ENCODE measurements at regions of chr19 and their contacts with region 1.

Region 1: DNA sequence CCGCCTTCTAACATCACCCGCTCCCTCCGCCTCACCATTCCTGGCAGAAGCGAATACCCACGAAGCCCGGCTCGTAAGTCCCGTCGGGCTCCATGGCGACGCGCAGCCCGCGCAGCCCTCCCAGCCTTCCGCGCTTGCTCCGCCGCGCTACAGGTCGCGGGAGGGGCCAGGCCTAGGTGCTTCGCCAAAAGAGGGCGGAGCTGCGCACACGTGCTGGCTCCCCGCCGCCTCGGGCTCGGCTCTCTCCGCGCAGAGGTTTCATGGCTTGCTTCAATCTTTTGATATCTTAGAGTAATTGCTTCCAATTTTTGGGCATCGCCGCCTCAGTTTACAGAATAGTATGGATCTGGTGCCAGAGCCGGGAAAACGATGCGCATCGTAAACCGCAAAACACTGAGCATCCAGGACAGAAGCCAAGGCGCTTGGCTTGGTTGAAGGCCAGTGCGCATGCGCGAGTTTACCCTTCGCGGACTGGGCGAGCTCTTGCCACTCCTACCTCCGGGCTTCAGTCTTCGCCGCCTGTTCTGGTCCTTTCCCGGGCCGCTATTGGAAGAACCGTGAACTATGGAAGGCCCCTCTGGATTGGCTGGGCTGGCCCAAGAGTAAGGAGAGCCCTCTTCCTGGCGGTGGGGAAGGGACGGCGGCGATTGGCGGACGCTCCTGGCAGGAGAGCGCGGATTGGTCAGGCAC is at the start of gene POLR2I:
- DNase-seq: peak; percentile 98 to 99 (median 98)
- ATAC-seq: peak; percentile 96
- H3K4me3 ChIP-seq: peak within 1 kb of the TSS; percentile 62
- H3K27ac ChIP-seq: peak within 1 kb of the TSS; percentile 74
- H3K4me1 ChIP-seq: peaks cover 5 to 38% of the 10 kb centered on the region in 2 experiments; a peak in 3 of 5 replicates
- H3K27me3 ChIP-seq: no peaks in the 10 kb centered on the region
- CTCF ChIP-seq: 0 out of 6 replicates have a peak, but pooled peaks of 1 of the 3 experiments have one; percentile 5
- EP300 ChIP-seq: no peak
- POLR2A ChIP-seq: peak; percentile 69
- RAD21 ChIP-seq: 0 out of 4 replicates have a peak, but pooled peaks of 1 of the 2 experiments have one; percentile 12
- polyA plus RNA-seq, gene POLR2I: 197 to 235 TPM

Region 2: DNA sequence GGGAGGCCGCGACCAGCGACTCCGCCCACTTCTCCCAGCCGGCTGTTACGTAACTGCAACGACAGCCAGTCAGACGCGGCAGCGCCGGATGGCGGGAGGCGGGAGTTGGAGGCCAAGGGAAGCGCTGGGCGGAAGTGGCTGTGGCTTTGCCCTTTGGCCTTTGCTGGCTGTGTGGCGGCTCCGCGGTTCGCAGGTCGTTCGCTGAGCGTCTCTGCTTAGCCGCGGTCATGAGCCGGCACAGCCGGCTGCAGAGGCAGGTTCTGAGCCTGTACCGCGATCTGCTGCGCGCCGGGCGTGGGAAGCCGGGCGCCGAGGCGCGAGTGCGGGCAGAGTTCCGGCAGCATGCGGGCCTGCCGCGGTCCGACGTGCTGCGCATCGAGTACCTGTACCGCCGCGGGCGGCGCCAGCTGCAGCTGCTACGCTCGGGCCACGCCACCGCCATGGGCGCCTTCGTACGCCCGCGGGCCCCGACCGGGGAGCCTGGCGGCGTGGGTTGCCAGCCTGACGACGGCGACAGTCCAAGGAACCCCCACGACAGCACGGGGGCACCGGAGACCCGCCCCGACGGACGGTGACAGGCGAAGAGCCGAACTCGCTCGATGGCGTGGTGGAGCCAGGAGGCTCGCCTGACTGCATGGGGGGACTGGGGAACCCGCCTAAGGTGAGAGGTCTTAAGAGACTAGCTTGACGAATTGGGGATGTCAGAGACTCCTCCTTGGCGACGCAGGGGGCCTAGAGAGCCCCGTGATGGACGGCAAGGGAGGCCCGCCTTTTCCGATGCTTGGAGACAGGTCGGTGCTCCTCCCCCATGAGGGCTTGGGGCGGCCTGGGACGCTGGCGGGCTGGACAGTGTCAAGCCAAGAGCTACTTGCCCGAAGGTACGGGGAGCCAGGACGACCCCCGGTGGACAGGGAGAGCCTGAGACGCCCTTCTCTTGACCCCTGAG is 119.6 kb before region 1 on chr19 and contains the start of gene SDHAF1:
- CTCF ChIA-PET with region 1: no interaction called
- POLR2A ChIA-PET with region 1: no interaction called
- in situ Hi-C with region 1: no loop called
- intact Hi-C with region 1: loop called (anchors 10 kb)
- DNase-seq: peak; percentile 95 to 98 (median 96)
- ATAC-seq: peak; percentile 93
- H3K4me3 ChIP-seq: peak within 1 kb of the TSS; percentile 59
- H3K27ac ChIP-seq: peak within 1 kb of the TSS; percentile 73
- H3K4me1 ChIP-seq: peaks cover 9 to 29% of the 10 kb centered on the region in 2 experiments; a peak in 4 of 5 replicates
- H3K27me3 ChIP-seq: no peaks in the 10 kb centered on the region
- CTCF ChIP-seq: peak in 2 of 3 experiments; percentile 3 to 14; a peak in 1 of 6 replicates
- EP300 ChIP-seq: no peak
- POLR2A ChIP-seq: peak; percentile 88
- RAD21 ChIP-seq: no peak
- polyA plus RNA-seq, gene SDHAF1: 0.42 to 1.1 TPM

Region 3: GRCh38 chr19:36060430-36060829 is 54.5 kb before region 1 on chr19:
- CTCF ChIA-PET with region 1: interaction called, 3 read pairs
- POLR2A ChIA-PET with region 1: no interaction called
- in situ Hi-C with region 1: no loop called
- intact Hi-C with region 1: loop called (anchors 5 kb)
- DNase-seq: peak; percentile 42 to 68 (median 47)
- ATAC-seq: peak; percentile 84
- H3K4me3 ChIP-seq: no peak overlapping the region
- H3K27ac ChIP-seq: no peak overlapping the region
- H3K4me1 ChIP-seq: peaks cover 5% of the 10 kb centered on the region in 2 experiments; a peak in 3 of 5 replicates
- H3K27me3 ChIP-seq: no peaks in the 10 kb centered on the region
- CTCF ChIP-seq: peak; percentile 55 to 72 (median 72)
- EP300 ChIP-seq: no peak
- POLR2A ChIP-seq: no peak
- RAD21 ChIP-seq: peak; percentile 50 to 59

Region 4: GRCh38 chr19:36089847-36090246 is 25.1 kb before region 1 on chr19:
- CTCF ChIA-PET with region 1: no interaction called
- POLR2A ChIA-PET with region 1: no interaction called
- in situ Hi-C with region 1: no loop called
- intact Hi-C with region 1: no loop called
- DNase-seq: no peak
- ATAC-seq: no peak
- H3K4me3 ChIP-seq: no peak overlapping the region
- H3K27ac ChIP-seq: no peak overlapping the region
- H3K4me1 ChIP-seq: no peaks in the 10 kb centered on the region
- H3K27me3 ChIP-seq: no peaks in the 10 kb centered on the region
- CTCF ChIP-seq: no peak
- EP300 ChIP-seq: no peak
- POLR2A ChIP-seq: no peak
- RAD21 ChIP-seq: no peak

Region 5: DNA sequence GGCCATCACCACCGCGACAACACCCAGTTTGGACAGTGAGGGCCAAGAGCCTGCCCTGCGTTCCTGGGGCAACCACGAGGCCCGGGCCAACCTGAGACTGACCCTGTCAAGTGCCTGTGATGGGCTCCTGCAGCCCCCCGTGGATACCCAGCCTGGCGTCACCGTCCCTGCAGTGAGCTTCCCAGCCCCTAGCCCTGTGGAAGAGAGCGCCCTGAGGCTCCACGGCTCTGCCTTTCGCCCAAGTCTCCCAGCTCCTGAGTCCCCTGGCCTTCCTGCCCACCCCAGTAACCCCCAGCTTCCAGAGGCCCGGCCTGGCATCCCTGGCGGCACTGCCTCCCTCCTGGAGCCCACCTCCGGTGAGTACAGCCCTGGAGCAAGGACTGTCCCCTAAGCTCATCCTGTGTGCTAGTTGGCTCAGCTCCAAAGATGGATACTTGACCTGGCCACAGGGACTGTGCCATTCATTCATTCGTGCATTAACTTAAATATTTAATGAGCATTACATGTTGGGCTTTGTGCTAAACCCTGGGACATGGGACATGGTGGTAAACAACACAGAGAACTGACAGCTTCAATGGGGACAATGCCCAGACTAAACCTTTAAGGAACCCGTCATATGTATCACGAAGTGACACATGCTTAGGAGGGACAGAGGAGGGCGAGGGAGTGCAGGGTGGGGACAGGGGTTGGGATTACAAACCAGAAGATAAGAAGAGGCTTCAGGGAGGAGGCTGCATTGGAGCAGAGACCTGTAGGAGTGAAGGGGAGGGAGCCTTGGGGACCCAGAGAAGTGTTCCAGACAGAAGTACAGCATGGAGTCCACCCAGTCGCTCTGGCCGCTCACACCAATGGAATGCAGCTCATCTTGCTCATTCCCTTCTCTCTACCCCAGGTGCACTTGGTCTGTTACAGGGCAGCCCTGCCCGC is 11.0 kb before region 1 on chr19:
- CTCF ChIA-PET with region 1: no interaction called
- POLR2A ChIA-PET with region 1: interaction called, 10 read pairs
- in situ Hi-C with region 1: no loop called
- intact Hi-C with region 1: no loop called
- DNase-seq: peak; percentile 69 to 90 (median 82)
- ATAC-seq: peak; percentile 93
- H3K4me3 ChIP-seq: no peak overlapping the region
- H3K27ac ChIP-seq: peak overlapping the region; percentile 31; the same call in 1 of the 3 replicates
- H3K4me1 ChIP-seq: peaks cover 15 to 54% of the 10 kb centered on the region in 2 experiments; a peak in 4 of 5 replicates
- H3K27me3 ChIP-seq: no peaks in the 10 kb centered on the region
- CTCF ChIP-seq: peak in 2 of 3 experiments; percentile 9 to 14; a peak in 1 of 6 replicates
- EP300 ChIP-seq: no peak; the same call in 1 of the 2 replicates
- POLR2A ChIP-seq: no peak
- RAD21 ChIP-seq: no peak

Region 6: GRCh38 chr19:36139473-36140303 is 24.8 kb after region 1 on chr19 and contains the start of gene CAPNS1:
- CTCF ChIA-PET with region 1: no interaction called
- POLR2A ChIA-PET with region 1: interaction called, 4 read pairs
- in situ Hi-C with region 1: no loop called
- intact Hi-C with region 1: loop called (anchors 2 kb)
- DNase-seq: peak; percentile 95 to 98 (median 96)
- ATAC-seq: peak; percentile 87
- H3K4me3 ChIP-seq: peak within 1 kb of the TSS; percentile 95
- H3K27ac ChIP-seq: peak within 1 kb of the TSS; percentile 99
- H3K4me1 ChIP-seq: peaks cover 13 to 37% of the 10 kb centered on the region in 2 experiments
- H3K27me3 ChIP-seq: no peaks in the 10 kb centered on the region
- CTCF ChIP-seq: peak in 2 of 3 experiments; percentile 17 to 35; a peak in 3 of 6 replicates
- EP300 ChIP-seq: no peak; the same call in 1 of the 2 replicates
- POLR2A ChIP-seq: peak; percentile 92
- RAD21 ChIP-seq: no peak
- polyA plus RNA-seq, gene CAPNS1: 77.9 to 115 TPM

Region 7: GRCh38 chr19:36169084-36169760 is 54.3 kb after region 1 on chr19:
- CTCF ChIA-PET with region 1: no interaction called
- POLR2A ChIA-PET with region 1: no interaction called
- in situ Hi-C with region 1: no loop called
- intact Hi-C with region 1: loop called (anchors 1 kb)
- DNase-seq: no peak
- ATAC-seq: no peak
- H3K4me3 ChIP-seq: no peak overlapping the region
- H3K27ac ChIP-seq: no peak overlapping the region
- H3K4me1 ChIP-seq: no peaks in the 10 kb centered on the region; a peak in 2 of 5 replicates
- H3K27me3 ChIP-seq: no peaks in the 10 kb centered on the region
- CTCF ChIP-seq: no peak
- EP300 ChIP-seq: no peak
- POLR2A ChIP-seq: no peak
- RAD21 ChIP-seq: no peak

Measured in K562 (cell line).